Transverse colon (tissue), 4 donors: ENCODE measurements at regions of chr5 and their contacts with region 1.

Region 1: DNA sequence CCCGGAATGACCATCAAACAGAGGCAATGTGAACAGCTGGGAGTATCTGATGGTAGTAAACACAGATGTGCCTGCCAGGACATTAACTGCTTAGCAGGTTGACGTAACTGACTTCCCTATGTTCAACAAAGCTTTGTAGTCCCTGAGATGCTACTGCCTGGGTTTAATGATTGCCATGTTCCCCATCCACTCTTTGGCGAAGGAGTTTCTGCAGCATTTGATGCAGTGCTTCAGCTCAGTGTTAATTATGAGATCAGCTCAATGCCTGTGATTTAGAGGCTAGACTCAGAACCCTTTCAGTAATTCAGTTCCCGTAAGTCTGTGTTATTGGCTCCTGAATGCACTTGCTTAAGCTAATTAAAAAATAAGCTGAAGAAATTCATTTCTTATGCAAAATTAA is 547.3 kb upstream of the ZNF608 start:
- DNase-seq: no peak
- H3K4me3 ChIP-seq: no peak overlapping the region
- H3K27ac ChIP-seq: no peak overlapping the region
- H3K4me1 ChIP-seq: no peaks in the 10 kb centered on the region
- H3K27me3 ChIP-seq: no peaks in the 10 kb centered on the region
- CTCF ChIP-seq: no peak
- EP300 ChIP-seq: no peak
- POLR2A ChIP-seq: no peak

Region 2: GRCh38 chr5:124206540-124206939 is 1087.2 kb before region 1 on chr5:
- in situ Hi-C with region 1: no loop called
- intact Hi-C with region 1: loop called (anchors 5 kb)
- DNase-seq: no peak
- H3K4me3 ChIP-seq: no peak overlapping the region
- H3K27ac ChIP-seq: no peak overlapping the region
- H3K4me1 ChIP-seq: no peaks in the 10 kb centered on the region
- H3K27me3 ChIP-seq: no peaks in the 10 kb centered on the region
- CTCF ChIP-seq: no peak
- EP300 ChIP-seq: no peak
- POLR2A ChIP-seq: no peak

Region 3: DNA sequence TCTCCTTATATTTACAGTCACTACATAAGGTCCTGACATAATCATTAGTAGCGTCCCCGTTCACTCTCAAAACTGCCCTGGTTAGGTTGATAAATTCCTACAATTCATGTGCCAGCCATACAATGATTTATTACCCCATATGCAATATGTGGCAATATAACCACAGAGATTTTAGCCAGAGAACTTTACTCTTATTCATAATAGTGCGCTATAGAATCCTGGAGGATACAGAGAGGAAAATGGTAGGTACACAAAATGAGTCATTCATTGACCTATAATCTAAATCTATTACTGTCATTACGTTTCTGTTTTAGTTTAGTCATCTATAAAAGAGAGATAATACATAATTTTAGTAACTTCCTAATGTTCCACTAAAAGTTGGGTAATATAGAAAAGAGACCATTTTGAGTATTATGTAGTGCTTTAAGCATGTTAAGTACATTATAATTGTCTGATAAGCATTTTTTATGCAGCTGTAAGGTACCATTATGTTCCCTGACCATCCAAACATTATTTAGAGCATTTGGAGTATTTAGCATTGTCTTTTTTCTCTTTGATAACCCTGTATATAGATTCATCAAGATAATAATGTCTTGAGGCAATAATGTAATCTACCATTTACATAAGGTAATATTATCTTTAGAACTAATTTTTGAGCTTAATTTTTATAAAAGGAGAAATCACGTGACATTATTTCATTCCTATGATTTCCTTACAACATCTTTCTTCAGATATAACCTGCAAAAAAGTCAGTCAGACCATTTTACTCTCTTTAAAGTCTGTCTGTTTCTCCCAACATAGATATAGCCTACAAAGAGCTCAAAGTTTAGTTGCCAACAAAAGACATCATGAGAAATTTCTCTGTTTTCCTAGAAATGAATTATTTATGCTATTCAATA is 108.2 kb after region 1 on chr5:
- in situ Hi-C with region 1: no loop called
- intact Hi-C with region 1: no loop called
- DNase-seq: no peak
- H3K4me3 ChIP-seq: no peak overlapping the region
- H3K27ac ChIP-seq: no peak overlapping the region
- H3K4me1 ChIP-seq: peaks cover 0 to 11% (median 4%) of the 10 kb centered on the region in 4 donors
- H3K27me3 ChIP-seq: no peaks in the 10 kb centered on the region
- CTCF ChIP-seq: no peak
- EP300 ChIP-seq: no peak
- POLR2A ChIP-seq: no peak